ENCODE measurements at regions of chr19 and their contacts with region 1.

Region 1: GRCh38 chr19:49451430-49452181 is at the start of gene PIH1D1:
- DNase-seq: peak; percentile 99
- ATAC-seq: peak; percentile 70
- H3K4me3 Mint-ChIP-seq: peak within 1 kb of the TSS; percentile 93
- H3K27ac Mint-ChIP-seq: peak within 1 kb of the TSS; percentile 100
- H3K4me1 Mint-ChIP-seq: peaks cover 53% of the 10 kb centered on the region
- H3K27me3 Mint-ChIP-seq: no peaks in the 10 kb centered on the region
- CTCF ChIP-seq: no peak
- total RNA-seq, gene PIH1D1: 124 to 126 TPM

Region 2: DNA sequence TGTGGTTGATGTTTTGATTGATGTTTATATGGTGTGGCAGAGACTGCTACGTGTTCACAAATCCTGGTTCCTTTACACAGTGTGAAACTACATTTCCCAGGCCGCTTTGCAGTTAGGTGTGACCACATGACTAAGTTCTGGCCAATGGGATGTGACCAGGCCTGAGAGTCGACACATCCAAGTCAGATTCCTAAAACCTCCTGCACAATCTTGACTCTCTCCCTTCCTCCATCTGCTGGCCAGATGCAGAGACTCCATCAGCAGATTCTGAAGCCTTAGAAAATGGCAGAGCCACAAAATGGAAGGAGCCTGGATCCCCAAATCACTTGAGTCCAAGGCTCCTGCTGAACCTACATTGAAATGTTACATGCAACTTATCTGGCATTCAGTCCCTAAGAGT is 103.8 kb before region 1 on chr19:
- CTCF ChIA-PET with region 1: no interaction called
- POLR2A ChIA-PET with region 1: no interaction called
- intact Hi-C with region 1: no loop called
- DNase-seq: peak; percentile 42
- ATAC-seq: peak; percentile 87
- H3K4me3 Mint-ChIP-seq: no peak overlapping the region
- H3K27ac Mint-ChIP-seq: no peak overlapping the region
- H3K4me1 Mint-ChIP-seq: peaks cover 8% of the 10 kb centered on the region
- H3K27me3 Mint-ChIP-seq: no peaks in the 10 kb centered on the region
- CTCF ChIP-seq: no peak

Region 3: GRCh38 chr19:49468746-49469447 is 17.3 kb after region 1 on chr19:
- CTCF ChIA-PET with region 1: interaction called, 33 read pairs
- POLR2A ChIA-PET with region 1: interaction called, 13 read pairs
- intact Hi-C with region 1: no loop called
- DNase-seq: peak; percentile 89
- ATAC-seq: peak; percentile 60
- H3K4me3 Mint-ChIP-seq: peak overlapping the region; percentile 24
- H3K27ac Mint-ChIP-seq: peak overlapping the region; percentile 95
- H3K4me1 Mint-ChIP-seq: peaks cover 41% of the 10 kb centered on the region
- H3K27me3 Mint-ChIP-seq: no peaks in the 10 kb centered on the region
- CTCF ChIP-seq: no peak

Region 4: GRCh38 chr19:49473868-49474544 is 22.4 kb after region 1 on chr19 and contains the start of gene FLT3LG:
- CTCF ChIA-PET with region 1: interaction called, 33 read pairs
- POLR2A ChIA-PET with region 1: interaction called, 13 read pairs
- intact Hi-C with region 1: no loop called
- DNase-seq: peak; percentile 93
- ATAC-seq: peak; percentile 60
- H3K4me3 Mint-ChIP-seq: peak within 1 kb of the TSS; percentile 89
- H3K27ac Mint-ChIP-seq: peak within 1 kb of the TSS; percentile 92
- H3K4me1 Mint-ChIP-seq: peaks cover 45% of the 10 kb centered on the region
- H3K27me3 Mint-ChIP-seq: no peaks in the 10 kb centered on the region
- CTCF ChIP-seq: peak; percentile 94
- total RNA-seq, gene FLT3LG: 57.7 to 61.2 TPM

Measured in activated CD8-positive, alpha-beta T cell treated with anti-CD3 and anti-CD28 coated beads for 36 hours (primary cell).